BJ (cell line): ENCODE measurements at regions of chr5 and their contacts with region 1.

Region 1: GRCh38 chr5:134626369-134627014 is 6.1 kb downstream of the SAR1B start:
- DNase-seq: no peak
- H3K4me3 ChIP-seq: no peak overlapping the region
- H3K27me3 ChIP-seq: no peaks in the 10 kb centered on the region
- CTCF ChIP-seq: no peak

Region 2: GRCh38 chr5:134296213-134296612 is 330.3 kb before region 1 on chr5:
- CTCF ChIA-PET with region 1: no interaction called
- POLR2A ChIA-PET with region 1: interaction called, 20 read pairs
- DNase-seq: no peak
- H3K4me3 ChIP-seq: no peak overlapping the region
- H3K27me3 ChIP-seq: no peaks in the 10 kb centered on the region
- CTCF ChIP-seq: no peak

Region 3: DNA sequence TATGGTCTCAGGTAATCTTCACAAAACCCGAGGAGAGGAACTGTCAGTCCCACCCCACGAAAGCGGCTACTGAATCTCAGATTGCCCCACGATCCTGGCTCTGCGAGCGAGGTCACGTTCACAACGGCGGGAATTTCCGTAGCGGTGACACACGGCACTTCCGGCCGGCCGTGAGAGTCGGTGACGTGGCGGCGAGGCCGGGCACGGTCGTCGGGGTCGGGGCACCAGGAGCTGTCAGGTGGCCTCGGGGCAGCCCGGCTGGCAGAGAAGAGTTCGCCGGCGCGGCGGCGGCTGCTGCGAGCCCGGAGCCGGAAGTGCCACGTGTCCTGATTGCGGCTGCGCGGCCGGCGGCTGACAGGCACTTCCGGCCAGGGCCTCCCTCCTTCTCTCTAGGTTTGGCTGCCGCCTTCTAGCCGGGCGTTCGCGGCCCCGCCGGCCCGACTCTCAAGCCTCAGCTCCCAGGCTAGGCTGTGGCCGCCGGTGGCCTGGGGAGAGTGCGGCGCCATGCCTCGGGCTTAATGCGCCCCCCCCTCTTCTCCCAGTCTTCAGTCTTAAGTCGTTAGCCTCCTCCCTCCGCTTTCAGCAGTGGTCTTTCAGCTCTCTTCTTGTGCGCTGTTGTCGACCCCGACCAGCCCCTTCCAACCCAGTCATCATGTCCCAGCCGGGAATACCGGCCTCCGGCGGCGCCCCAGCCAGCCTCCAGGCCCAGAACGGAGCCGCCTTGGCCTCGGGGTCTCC is 22.1 kb after region 1 on chr5 and contains the start of gene SEC24A:
- CTCF ChIA-PET with region 1: no interaction called
- POLR2A ChIA-PET with region 1: interaction called, 15 read pairs
- DNase-seq: no peak
- H3K4me3 ChIP-seq: peak within 1 kb of the TSS; percentile 99
- H3K27me3 ChIP-seq: no peaks in the 10 kb centered on the region
- CTCF ChIP-seq: no peak
- polyA plus RNA-seq, gene SEC24A: 27.9 and 35.0 TPM in 2 replicates